ENCODE measurements at regions of chr14 and their contacts with region 1.

Region 1: GRCh38 chr14:55191203-55192053 is at the start of gene DLGAP5:
- DNase-seq: peak; percentile 97
- ATAC-seq: peak; percentile 99
- H3K4me3 Mint-ChIP-seq: peak within 1 kb of the TSS; percentile 98
- H3K27ac Mint-ChIP-seq: peak within 1 kb of the TSS; percentile 97
- H3K4me1 Mint-ChIP-seq: peaks cover 36% of the 10 kb centered on the region
- H3K27me3 Mint-ChIP-seq: peaks cover 4% of the 10 kb centered on the region
- total RNA-seq, gene DLGAP5: 110 to 112 TPM

Region 2: DNA sequence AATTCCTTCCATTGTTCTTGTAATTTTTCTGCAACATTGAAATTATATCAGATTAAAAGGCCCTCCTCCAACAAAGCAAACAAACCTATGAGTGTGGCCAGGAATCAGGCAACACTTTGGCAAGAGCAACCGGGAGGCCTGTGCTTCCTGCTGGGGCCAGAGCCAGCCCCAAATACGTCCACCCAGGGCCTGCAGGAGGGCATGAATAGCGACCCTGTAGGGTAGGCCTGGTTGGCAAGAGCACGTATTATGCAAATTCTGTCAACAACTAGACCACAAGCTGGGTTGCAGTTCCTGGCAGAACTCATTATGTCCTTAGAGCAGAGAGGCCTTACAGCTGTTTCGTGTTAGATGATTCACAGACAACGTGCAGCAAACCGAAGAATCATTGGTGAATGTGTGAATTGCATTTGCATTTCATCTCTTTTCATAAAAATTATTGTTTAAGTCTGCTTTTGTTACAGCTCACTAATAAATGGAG is 89.2 kb before region 1 on chr14:
- CTCF ChIA-PET with region 1: interaction called, 3 read pairs
- POLR2A ChIA-PET with region 1: interaction called, 12 read pairs
- DNase-seq: peak; percentile 76
- ATAC-seq: peak; percentile 62
- H3K4me3 Mint-ChIP-seq: peak overlapping the region; percentile 68
- H3K27ac Mint-ChIP-seq: peak overlapping the region; percentile 98
- H3K4me1 Mint-ChIP-seq: peaks cover 70% of the 10 kb centered on the region
- H3K27me3 Mint-ChIP-seq: no peaks in the 10 kb centered on the region

Region 3: GRCh38 chr14:55221186-55221585 is 29.8 kb after region 1 on chr14:
- CTCF ChIA-PET with region 1: no interaction called
- POLR2A ChIA-PET with region 1: no interaction called
- DNase-seq: no peak
- ATAC-seq: no peak
- H3K4me3 Mint-ChIP-seq: no peak overlapping the region
- H3K27ac Mint-ChIP-seq: no peak overlapping the region
- H3K4me1 Mint-ChIP-seq: no peaks in the 10 kb centered on the region
- H3K27me3 Mint-ChIP-seq: peaks cover 18% of the 10 kb centered on the region

Measured in activated CD8-positive, alpha-beta T cell treated with anti-CD3 and anti-CD28 coated beads, Interleukin-2, amount 10 ng/mL, durations not matched to agents 7 days and 5 days (primary cell).